GM18951 (cell line): ENCODE measurements at regions of chr11 and their contacts with region 1.

Region 1: DNA sequence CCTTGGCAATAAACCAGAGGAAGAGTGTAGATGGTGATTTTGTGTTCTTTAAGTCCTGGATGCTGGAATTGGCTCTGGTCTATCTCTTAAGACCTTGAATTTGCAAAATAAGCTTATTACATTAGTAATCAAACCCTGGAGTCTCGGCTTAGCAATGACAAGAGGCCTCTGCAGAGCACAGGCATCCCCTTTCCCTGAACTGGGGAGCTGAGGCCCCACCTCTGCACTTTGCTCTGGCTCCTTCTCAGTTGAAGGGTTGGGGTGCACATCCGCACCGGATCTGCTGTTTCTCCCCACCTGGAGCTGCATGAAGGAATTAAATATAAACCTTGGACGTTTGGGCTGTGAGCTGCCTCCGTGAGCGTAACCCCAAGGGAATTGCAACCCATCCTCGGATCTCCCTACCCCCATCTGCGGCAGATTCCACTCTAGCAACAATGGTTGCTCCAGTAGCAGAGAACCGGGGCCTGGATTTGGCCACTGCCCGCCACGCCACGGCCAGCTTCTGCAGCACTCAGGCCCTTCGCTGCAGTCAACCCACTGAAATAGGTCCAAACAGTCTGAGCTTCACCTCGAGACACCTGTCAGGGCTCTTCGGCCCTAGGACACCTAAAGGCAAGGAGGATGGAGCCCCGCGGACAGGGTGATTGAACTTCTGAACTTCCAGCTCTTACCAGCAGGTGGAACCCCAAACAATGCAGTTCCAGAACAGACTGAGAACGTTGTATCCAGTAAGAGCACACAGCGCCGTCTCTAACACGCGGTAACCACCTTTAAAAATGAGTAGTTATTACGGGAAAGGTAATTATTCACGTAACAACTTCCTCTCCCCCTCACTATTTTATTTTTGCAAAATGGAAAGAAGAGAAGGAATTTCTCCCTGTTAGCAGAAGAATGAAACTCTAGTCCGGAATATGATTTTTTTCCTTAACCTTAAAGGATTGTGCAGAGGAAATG is 54.8 kb upstream of the CAPRIN1 start:
- POLR2A ChIP-seq: no peak

Region 2: DNA sequence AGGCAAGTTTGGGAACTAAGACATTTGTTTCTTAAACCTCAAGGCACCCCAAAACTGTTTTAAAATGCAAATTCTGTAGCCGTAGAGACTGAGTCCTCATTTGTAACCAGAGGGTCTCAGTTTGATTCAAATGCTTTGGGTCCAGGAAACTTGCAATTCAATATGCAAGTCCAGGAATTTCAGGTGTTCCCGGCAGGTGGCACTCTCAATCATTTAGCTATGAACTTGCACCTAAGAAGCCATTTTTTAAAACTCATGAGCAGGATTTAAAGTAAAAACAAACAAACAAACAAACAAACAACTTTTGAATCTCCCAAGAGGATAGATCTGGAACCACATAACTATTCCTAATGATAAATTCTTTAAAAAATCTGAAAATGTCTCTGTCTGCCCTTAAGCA is 369.7 kb after region 1 on chr11:
- in situ Hi-C with region 1: loop called (anchors 10 kb)
- POLR2A ChIP-seq: no peak